OCI-LY7 (cell line): ENCODE measurements at regions of chr6 and their contacts with region 1.

Region 1: GRCh38 chr6:96626759-96627364 is 63.9 kb downstream of the FHL5 start:
- DNase-seq: peak; percentile 66
- H3K4me3 ChIP-seq: no peak overlapping the region
- H3K27ac ChIP-seq: no peak overlapping the region
- H3K4me1 ChIP-seq: peaks cover 19% of the 10 kb centered on the region
- CTCF ChIP-seq: peak; percentile 83

Region 2: GRCh38 chr6:96760153-96760687 is 133.4 kb after region 1 on chr6:
- CTCF ChIA-PET with region 1: no interaction called
- POLR2A ChIA-PET with region 1: interaction called, 3 read pairs
- intact Hi-C with region 1: loop called (anchors 2 kb)
- DNase-seq: peak; percentile 4
- H3K4me3 ChIP-seq: no peak overlapping the region
- H3K27ac ChIP-seq: no peak overlapping the region
- H3K4me1 ChIP-seq: no peaks in the 10 kb centered on the region
- CTCF ChIP-seq: peak; percentile 44; the same call in 1 of the 2 replicates

Region 3: DNA sequence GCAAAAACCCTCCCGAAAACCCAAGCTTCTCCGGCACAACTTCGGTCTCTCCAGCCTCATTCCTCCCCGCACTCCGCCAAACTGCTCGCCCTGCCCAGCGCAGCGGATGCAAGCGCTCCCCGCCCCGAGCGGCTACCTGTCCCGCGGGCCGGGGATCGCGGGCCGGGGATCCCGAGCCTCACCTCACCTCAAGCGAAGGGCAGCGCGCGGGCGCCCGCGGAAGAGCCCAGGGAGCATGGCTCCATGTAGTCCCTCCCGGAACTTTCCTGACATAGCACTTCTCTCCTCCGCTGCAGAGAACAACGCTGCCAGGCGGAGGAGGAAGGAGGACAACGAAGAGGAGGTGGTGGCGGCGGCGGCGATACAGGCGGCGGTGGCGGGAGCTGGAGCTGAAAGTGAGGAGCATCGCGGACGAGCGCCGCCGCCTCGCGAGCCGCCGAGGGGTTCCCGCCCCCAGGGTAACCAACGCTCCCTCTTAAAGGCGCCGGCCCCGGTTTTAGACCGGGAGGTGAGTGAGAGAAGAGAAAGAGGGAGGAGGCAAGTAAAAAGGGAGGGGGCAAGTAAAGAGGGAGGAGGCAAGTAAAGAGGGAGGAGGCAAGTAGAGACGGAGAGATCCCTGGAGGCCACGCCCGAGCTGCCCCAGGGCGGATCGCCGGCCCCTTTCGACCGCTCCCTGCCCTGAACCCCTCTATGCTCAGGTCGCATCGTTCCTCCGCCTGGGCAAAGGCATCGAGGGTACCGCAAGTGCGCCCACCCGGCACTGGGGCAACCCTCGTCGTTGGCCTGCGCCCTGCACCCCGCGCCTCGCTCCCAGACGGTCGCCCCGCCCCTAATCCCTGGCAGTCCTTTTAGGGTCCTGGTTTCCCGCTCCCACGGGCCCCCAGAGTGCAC is 210.5 kb after region 1 on chr6 and contains the start of gene GPR63:
- CTCF ChIA-PET with region 1: no interaction called
- POLR2A ChIA-PET with region 1: no interaction called
- intact Hi-C with region 1: loop called (anchors 5 kb)
- DNase-seq: peak; percentile 64
- H3K4me3 ChIP-seq: peak within 1 kb of the TSS; percentile 72
- H3K27ac ChIP-seq: no peak within 1 kb of the TSS
- H3K4me1 ChIP-seq: peaks cover 6% of the 10 kb centered on the region
- CTCF ChIP-seq: no peak
- total RNA-seq, gene GPR63: 0.57 and 1.0 TPM in 2 replicates

Region 4: GRCh38 chr6:97059473-97059872 is 432.6 kb after region 1 on chr6:
- CTCF ChIA-PET with region 1: no interaction called
- POLR2A ChIA-PET with region 1: interaction called, 3 read pairs
- intact Hi-C with region 1: loop called (anchors 2 kb)
- DNase-seq: peak; percentile 62
- H3K4me3 ChIP-seq: no peak overlapping the region
- H3K27ac ChIP-seq: no peak overlapping the region
- H3K4me1 ChIP-seq: no peaks in the 10 kb centered on the region
- CTCF ChIP-seq: peak; percentile 91